Activated CD4-positive, alpha-beta T cell treated with anti-CD3 and anti-CD28 coated beads for 36 hours (primary cell): ENCODE measurements at regions of chr10 and their contacts with region 1.

Region 1: GRCh38 chr10:6348096-6348874 is 145.6 kb downstream of the PFKFB3 start:
- DNase-seq: peak; percentile 94
- ATAC-seq: peak; percentile 91
- H3K4me3 Mint-ChIP-seq: peak overlapping the region; percentile 65
- H3K27ac Mint-ChIP-seq: peak overlapping the region; percentile 98
- H3K4me1 Mint-ChIP-seq: peaks cover 62% of the 10 kb centered on the region
- H3K27me3 Mint-ChIP-seq: no peaks in the 10 kb centered on the region

Region 2: DNA sequence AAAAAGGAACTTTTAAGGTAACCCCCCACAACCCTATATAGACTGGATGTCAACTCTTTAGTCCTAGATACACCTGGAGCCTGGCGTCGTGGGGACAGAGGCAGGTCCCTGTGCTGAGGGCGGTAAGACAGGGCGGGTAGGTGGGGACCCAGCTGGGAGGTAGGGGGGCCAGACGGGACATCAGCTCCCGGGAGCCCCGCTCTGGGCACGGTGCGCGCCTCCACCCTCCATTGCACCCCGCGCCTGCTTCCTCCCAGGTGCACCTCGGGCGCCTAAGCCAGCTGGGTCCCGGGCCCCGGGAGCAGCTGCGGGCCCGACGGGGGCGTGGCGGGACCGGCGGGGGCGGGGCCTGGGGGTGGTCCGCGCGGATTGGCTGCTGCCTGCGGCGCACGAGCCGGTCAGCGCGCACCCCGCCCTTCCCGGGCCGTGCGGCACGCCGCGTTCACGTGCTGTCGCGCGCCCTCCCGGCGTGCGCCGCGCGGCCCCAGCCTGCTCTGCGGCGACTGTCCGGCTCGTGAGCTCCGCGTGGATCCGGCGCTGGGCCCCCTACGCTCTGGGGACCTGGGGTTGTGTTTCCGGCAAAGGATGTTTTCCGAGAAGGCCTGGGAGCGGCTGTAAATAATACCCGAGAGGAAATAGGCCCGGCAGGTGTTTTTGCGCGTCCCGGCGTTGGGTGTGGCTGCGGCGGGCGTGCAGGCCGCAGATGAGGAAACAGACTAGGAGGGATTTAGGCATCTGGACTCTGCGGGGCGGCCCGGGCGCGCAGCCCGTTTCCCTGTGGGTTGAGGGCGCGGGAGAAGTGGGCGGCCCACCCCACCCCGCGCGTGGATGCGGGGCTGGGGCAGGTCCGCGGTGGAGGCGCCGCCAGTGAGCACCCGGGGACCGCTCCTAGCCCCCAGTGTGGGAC is 184.7 kb before region 1 on chr10:
- CTCF ChIA-PET with region 1: interaction called, 5 read pairs
- POLR2A ChIA-PET with region 1: interaction called, 10 read pairs
- intact Hi-C with region 1: no loop called
- DNase-seq: peak; percentile 94
- ATAC-seq: peak; percentile 92
- H3K4me3 Mint-ChIP-seq: peak overlapping the region; percentile 92
- H3K27ac Mint-ChIP-seq: peak overlapping the region; percentile 95
- H3K4me1 Mint-ChIP-seq: peaks cover 67% of the 10 kb centered on the region
- H3K27me3 Mint-ChIP-seq: no peaks in the 10 kb centered on the region

Region 3: GRCh38 chr10:6275022-6275997 is 73.0 kb before region 1 on chr10:
- CTCF ChIA-PET with region 1: interaction called, 9 read pairs
- POLR2A ChIA-PET with region 1: interaction called, 28 read pairs
- intact Hi-C with region 1: loop called (anchors 1 kb)
- DNase-seq: peak; percentile 97
- ATAC-seq: peak; percentile 91
- H3K4me3 Mint-ChIP-seq: peak overlapping the region; percentile 70
- H3K27ac Mint-ChIP-seq: peak overlapping the region; percentile 97
- H3K4me1 Mint-ChIP-seq: peaks cover 69% of the 10 kb centered on the region
- H3K27me3 Mint-ChIP-seq: no peaks in the 10 kb centered on the region

Region 4: DNA sequence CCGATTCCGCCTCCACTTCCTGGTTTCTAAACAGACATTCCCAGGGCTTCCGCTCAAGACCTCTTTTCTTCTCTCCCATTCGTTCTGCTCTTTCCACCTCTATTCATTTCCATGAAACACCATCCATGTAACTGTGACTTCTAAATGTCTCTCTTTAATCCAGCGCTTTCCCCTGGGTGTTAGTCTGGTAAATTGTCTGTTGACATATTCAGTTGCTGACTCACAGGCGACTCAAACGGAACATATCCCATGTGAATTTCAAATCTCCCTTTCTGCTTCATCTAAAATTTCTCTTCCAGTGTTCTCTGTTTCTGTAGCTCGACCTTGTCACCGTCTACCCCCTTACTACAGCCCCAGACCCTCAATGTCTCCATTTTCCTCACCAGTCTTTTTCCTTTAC is 26.4 kb before region 1 on chr10:
- CTCF ChIA-PET with region 1: no interaction called
- POLR2A ChIA-PET with region 1: interaction called, 3 read pairs
- intact Hi-C with region 1: loop called in 1 of 2 experiments (anchors 2 kb)
- DNase-seq: peak; percentile 28
- ATAC-seq: peak; percentile 49
- H3K4me3 Mint-ChIP-seq: no peak overlapping the region
- H3K27ac Mint-ChIP-seq: no peak overlapping the region
- H3K4me1 Mint-ChIP-seq: no peaks in the 10 kb centered on the region
- H3K27me3 Mint-ChIP-seq: no peaks in the 10 kb centered on the region

Region 5: DNA sequence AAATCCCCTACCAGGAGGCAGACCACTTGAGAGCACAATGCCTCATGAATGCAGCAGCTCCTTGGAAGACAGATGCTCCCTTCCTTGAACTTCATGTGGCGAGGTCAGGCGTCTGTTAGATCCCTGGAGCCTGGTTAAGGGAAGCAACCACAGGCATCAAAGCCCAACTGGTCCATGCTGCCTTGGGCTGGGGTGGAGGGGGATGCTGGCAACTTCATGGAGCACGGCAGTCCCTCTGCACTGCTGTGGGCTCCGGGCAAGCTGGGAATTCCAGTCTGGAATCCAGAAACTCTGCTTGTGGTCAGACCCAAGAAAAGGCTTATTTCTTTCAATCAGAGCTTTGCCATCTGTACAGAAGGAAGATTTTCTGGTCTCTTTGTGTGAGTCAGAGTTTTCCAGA is 15.2 kb before region 1 on chr10:
- CTCF ChIA-PET with region 1: no interaction called
- POLR2A ChIA-PET with region 1: no interaction called
- intact Hi-C with region 1: no loop called
- DNase-seq: no peak
- ATAC-seq: no peak
- H3K4me3 Mint-ChIP-seq: no peak overlapping the region
- H3K27ac Mint-ChIP-seq: no peak overlapping the region
- H3K4me1 Mint-ChIP-seq: no peaks in the 10 kb centered on the region
- H3K27me3 Mint-ChIP-seq: no peaks in the 10 kb centered on the region

Region 6: DNA sequence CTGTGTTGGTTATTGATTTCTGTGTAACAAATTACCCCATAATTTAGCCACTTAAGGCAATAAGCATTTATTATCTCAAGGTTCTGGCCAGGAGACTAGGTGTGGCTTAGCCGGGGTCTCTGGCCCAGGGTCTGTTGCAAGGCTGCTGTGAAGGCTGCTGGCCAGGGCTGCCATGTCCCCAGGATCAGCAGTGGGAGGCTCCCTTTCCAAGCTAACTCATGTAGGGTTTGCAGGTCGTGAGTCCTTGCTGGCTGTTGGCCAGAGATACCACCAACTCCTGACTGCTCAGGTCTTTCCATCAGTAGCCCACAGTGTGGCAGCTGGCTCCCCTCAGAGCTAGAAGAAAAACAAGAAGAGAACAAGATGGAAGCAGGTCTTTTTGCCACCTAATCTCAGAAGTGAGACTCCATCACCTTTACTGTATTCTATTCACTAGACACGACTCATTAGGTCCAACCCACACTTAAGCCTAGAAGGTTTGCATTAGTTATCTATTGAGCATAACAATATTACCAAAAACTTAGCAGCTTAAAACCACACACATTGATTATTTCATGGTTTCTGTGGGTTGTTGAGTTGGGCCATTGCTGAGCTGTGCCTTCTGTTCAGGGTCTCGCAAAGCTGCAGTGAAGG is 40.1 kb after region 1 on chr10:
- CTCF ChIA-PET with region 1: interaction called, 8 read pairs
- POLR2A ChIA-PET with region 1: interaction called, 12 read pairs
- intact Hi-C with region 1: no loop called
- DNase-seq: no peak
- ATAC-seq: peak; percentile 79
- H3K4me3 Mint-ChIP-seq: no peak overlapping the region
- H3K27ac Mint-ChIP-seq: no peak overlapping the region
- H3K4me1 Mint-ChIP-seq: peaks cover 18% of the 10 kb centered on the region
- H3K27me3 Mint-ChIP-seq: no peaks in the 10 kb centered on the region